ENCODE measurements at regions of chr19 and their contacts with region 1.

Region 1: DNA sequence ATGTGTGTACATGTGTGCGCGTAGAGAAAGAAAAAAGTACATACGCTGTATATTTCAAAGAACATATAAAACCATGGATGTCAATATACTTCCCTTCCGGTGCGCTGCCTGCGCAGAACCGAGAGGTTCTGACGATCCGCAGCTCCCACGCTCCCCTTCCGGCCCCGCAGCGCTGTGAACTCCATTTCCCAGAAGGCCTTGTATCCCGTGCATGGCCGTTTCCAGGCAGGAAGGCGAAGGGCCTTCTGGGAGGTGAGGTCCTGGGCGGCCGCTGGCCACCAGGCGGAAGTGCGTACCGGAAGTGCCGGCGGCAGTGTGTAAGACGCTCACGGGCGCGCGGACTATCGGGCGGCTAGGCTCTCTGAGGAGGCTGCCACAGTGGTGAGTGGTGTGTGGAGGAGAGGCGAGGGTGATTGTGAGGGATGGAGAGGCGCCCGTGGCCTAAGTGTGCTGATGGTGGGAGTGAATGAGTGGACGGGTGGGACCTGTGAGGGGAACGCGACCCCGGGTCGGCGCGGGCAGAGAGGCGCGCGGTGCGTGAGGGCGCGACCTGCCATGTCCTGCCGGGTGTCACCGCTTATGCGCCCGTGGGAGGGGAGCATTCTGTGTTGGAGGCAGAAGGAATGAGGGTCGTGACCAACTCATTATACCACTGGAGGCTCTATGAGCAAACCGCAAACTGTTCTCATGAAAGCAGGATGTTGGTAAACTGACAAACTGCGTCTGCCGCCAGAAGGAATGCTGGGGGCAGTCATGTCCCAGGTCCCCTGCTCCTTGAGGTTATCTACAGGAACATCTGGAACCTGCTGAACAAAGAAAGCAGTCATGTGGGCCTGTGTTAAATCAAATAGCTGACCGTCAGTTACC is at the start of gene ERVK3-1:
- DNase-seq: peak; percentile 97
- ATAC-seq: peak; percentile 98
- H3K4me3 Mint-ChIP-seq: peak within 1 kb of the TSS; percentile 99
- H3K27ac Mint-ChIP-seq: peak within 1 kb of the TSS; percentile 100
- H3K4me1 Mint-ChIP-seq: peaks cover 52% of the 10 kb centered on the region
- H3K27me3 Mint-ChIP-seq: no peaks in the 10 kb centered on the region
- total RNA-seq, gene ERVK3-1: 38.6 to 53.6 TPM

Region 2: GRCh38 chr19:58228585-58229254 is 76.6 kb before region 1 on chr19 and contains the start of gene ZNF544:
- CTCF ChIA-PET with region 1: interaction called, 5 read pairs
- POLR2A ChIA-PET with region 1: no interaction called
- intact Hi-C with region 1: loop called in 1 of 2 experiments (anchors 1 kb)
- DNase-seq: peak; percentile 85
- ATAC-seq: peak; percentile 87
- H3K4me3 Mint-ChIP-seq: peak within 1 kb of the TSS; percentile 91
- H3K27ac Mint-ChIP-seq: peak within 1 kb of the TSS; percentile 95
- H3K4me1 Mint-ChIP-seq: peaks cover 24% of the 10 kb centered on the region
- H3K27me3 Mint-ChIP-seq: no peaks in the 10 kb centered on the region
- total RNA-seq, gene ZNF544: 32.2 to 38.5 TPM

Region 3: GRCh38 chr19:58362272-58362994 is 57.1 kb after region 1 on chr19 and contains the start of gene ZNF497:
- CTCF ChIA-PET with region 1: no interaction called
- POLR2A ChIA-PET with region 1: no interaction called
- intact Hi-C with region 1: loop called in 1 of 2 experiments (anchors 1 kb)
- DNase-seq: peak; percentile 99
- ATAC-seq: peak; percentile 94
- H3K4me3 Mint-ChIP-seq: peak within 1 kb of the TSS; percentile 86
- H3K27ac Mint-ChIP-seq: peak within 1 kb of the TSS; percentile 93
- H3K4me1 Mint-ChIP-seq: peaks cover 7% of the 10 kb centered on the region
- H3K27me3 Mint-ChIP-seq: no peaks in the 10 kb centered on the region
- total RNA-seq, gene ZNF497: 1.1 to 1.5 TPM

Region 4: GRCh38 chr19:58408152-58409009 is 103.1 kb after region 1 on chr19 and contains the start of gene ZNF584:
- CTCF ChIA-PET with region 1: no interaction called
- POLR2A ChIA-PET with region 1: no interaction called
- intact Hi-C with region 1: loop called in 1 of 2 experiments (anchors 1 kb)
- DNase-seq: peak; percentile 97
- ATAC-seq: peak; percentile 97
- H3K4me3 Mint-ChIP-seq: peak within 1 kb of the TSS; percentile 84
- H3K27ac Mint-ChIP-seq: peak within 1 kb of the TSS; percentile 92
- H3K4me1 Mint-ChIP-seq: peaks cover 29% of the 10 kb centered on the region
- H3K27me3 Mint-ChIP-seq: no peaks in the 10 kb centered on the region
- total RNA-seq, gene ZNF584: 9.9 to 11.2 TPM

Region 5: GRCh38 chr19:58466760-58467589 is 161.7 kb after region 1 on chr19 and contains the start of gene ZNF324:
- CTCF ChIA-PET with region 1: no interaction called
- POLR2A ChIA-PET with region 1: no interaction called
- intact Hi-C with region 1: loop called in 1 of 2 experiments (anchors 1 kb)
- DNase-seq: peak; percentile 99
- ATAC-seq: peak; percentile 98
- H3K4me3 Mint-ChIP-seq: peak within 1 kb of the TSS; percentile 86
- H3K27ac Mint-ChIP-seq: peak within 1 kb of the TSS; percentile 47
- H3K4me1 Mint-ChIP-seq: peaks cover 22% of the 10 kb centered on the region
- H3K27me3 Mint-ChIP-seq: peaks cover 2% of the 10 kb centered on the region
- total RNA-seq, gene ZNF324: 4.7 to 7.5 TPM

Region 6: GRCh38 chr19:58513694-58514563 is 208.6 kb after region 1 on chr19:
- CTCF ChIA-PET with region 1: no interaction called
- POLR2A ChIA-PET with region 1: no interaction called
- intact Hi-C with region 1: loop called in 1 of 2 experiments (anchors 1 kb)
- DNase-seq: peak; percentile 99
- ATAC-seq: peak; percentile 88
- H3K4me3 Mint-ChIP-seq: peak overlapping the region; percentile 88
- H3K27ac Mint-ChIP-seq: peak overlapping the region; percentile 81
- H3K4me1 Mint-ChIP-seq: peaks cover 27% of the 10 kb centered on the region
- H3K27me3 Mint-ChIP-seq: no peaks in the 10 kb centered on the region

Region 7: GRCh38 chr19:58572818-58573657 is 267.7 kb after region 1 on chr19 and contains the start of gene MZF1:
- CTCF ChIA-PET with region 1: no interaction called
- POLR2A ChIA-PET with region 1: no interaction called
- intact Hi-C with region 1: loop called in 1 of 2 experiments (anchors 1 kb)
- DNase-seq: peak; percentile 100
- ATAC-seq: peak; percentile 69
- H3K4me3 Mint-ChIP-seq: peak within 1 kb of the TSS; percentile 95
- H3K27ac Mint-ChIP-seq: peak within 1 kb of the TSS; percentile 100
- H3K4me1 Mint-ChIP-seq: peaks cover 38% of the 10 kb centered on the region
- H3K27me3 Mint-ChIP-seq: no peaks in the 10 kb centered on the region
- total RNA-seq, gene MZF1: 14.3 to 15.0 TPM